PC-3 (cell line): ENCODE measurements at regions of chr7 and their contacts with region 1.

Region 1: DNA sequence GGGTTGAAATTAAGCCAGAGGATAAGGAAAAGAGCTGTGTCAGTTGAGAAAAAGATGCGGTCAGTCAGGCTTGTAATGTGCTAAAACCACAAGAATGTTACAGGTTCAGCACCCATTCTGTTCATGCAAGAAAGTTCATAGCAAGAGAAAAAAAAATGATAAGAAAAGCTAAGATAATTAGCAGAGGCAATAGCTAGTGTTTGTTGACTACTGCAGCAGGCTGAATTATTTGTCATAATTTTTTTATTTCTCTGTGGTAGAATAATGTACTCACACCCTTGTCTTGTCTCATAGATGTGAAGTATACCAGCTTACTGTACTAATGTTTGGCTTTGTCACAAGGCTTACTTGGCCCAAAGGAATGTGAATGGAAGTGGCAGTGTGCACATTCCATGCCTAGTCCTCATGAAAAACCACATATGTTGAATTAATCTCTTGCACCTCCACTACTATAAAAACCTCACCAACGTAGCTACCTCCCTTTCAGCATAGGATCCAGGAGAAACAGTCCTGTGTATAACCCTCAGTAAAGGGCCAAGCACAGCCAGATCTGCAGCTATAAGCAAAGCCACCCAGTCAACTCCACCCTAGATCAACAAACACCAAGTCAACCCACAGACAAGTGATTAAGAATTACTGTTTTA is 74.8 kb downstream of the CRPPA start:
- DNase-seq: peak; percentile 88
- ATAC-seq: peak; percentile 91
- H3K4me3 ChIP-seq: no peak overlapping the region; the same call in 1 of the 2 replicates
- H3K27ac ChIP-seq: peak overlapping the region; percentile 39
- H3K4me1 ChIP-seq: peaks cover 29% of the 10 kb centered on the region
- H3K27me3 ChIP-seq: no peaks in the 10 kb centered on the region
- CTCF ChIP-seq: no peak

Region 2: DNA sequence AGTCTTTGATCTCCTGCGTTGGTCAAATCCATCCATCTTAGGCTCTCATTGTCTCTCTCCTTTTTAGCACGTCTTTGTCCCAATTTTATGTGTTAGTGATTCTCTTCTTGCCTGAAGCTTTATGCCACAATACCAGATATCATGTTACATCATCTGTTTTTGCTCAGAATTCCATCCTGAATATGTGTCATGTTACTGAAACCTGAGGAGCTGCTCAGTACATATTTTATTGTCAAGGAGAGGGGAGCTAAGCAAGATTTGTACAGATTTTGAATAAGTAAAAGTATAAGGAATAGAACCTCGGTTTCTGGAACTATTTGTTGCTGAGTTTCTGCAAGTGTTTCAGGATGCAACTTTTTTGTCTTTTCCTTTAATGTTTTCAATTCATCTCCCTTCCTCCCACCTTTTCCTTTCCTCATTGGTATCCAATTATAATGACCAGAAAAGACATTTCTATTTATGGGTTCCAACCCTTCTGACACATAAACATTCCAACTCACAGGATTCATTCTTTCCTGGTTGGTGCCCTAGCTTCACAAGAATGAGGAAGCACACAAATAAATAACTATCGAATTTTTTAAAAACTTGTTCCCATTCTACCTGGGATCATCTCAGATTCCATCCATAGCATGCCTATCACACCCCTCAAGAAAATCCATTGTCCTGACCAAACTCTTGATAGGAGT is 216.9 kb before region 1 on chr7:
- CTCF ChIA-PET with region 1: no interaction called
- POLR2A ChIA-PET with region 1: no interaction called
- intact Hi-C with region 1: loop called (anchors 5 kb)
- DNase-seq: peak; percentile 86
- ATAC-seq: peak; percentile 96
- H3K4me3 ChIP-seq: peak overlapping the region; percentile 42; the same call in 1 of the 2 replicates
- H3K27ac ChIP-seq: peak overlapping the region; percentile 55
- H3K4me1 ChIP-seq: peaks cover 23% of the 10 kb centered on the region
- H3K27me3 ChIP-seq: no peaks in the 10 kb centered on the region
- CTCF ChIP-seq: no peak

Region 3: DNA sequence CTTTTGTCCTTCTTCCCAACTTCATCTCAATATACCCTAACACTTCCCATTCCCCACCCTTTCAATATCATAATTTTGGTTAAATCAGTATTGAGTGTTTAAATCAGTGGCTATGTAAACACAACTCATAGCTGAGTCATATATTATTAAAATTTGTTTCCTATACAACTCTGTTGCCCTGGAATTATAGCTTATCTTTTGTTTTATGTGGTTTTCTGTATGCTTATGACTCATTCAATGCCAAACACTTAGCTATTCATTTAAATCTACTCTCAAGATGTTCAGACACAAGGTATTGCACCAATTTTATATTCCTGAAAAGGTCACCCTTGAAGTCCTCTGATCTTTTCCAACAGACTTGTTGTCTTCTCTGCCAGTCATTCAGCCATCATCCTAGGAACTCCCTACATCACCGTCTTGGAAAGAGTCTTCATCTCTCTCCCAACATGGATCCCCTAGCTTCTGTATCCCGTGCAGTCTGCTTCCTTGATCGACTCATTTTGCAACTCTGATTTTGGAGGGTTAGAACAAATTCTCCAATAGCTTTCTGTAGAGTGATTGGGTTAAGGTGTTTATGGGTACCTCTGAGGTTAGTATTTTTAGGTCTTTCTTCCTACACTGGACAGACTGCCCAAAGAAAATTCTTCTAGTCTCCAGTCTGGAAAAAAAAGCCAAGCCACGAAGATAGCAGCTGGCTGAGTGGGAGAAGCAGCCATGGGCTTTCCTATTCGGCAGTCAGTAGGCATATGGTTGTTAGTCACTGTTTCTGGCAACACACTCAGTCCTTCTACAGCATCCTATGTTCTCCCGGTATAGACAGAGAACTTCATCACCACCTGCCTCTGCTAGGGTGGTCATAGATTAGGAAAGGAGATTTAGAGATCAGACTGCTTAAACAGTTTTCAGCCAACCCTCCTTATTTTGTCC is 27.2 kb before region 1 on chr7:
- CTCF ChIA-PET with region 1: no interaction called
- POLR2A ChIA-PET with region 1: no interaction called
- intact Hi-C with region 1: loop called (anchors 1 kb)
- DNase-seq: peak; percentile 82
- ATAC-seq: peak; percentile 94
- H3K4me3 ChIP-seq: no peak overlapping the region
- H3K27ac ChIP-seq: peak overlapping the region; percentile 62
- H3K4me1 ChIP-seq: peaks cover 20% of the 10 kb centered on the region
- H3K27me3 ChIP-seq: no peaks in the 10 kb centered on the region
- CTCF ChIP-seq: no peak

Region 4: GRCh38 chr7:16402091-16402490 is 55.6 kb after region 1 on chr7:
- CTCF ChIA-PET with region 1: no interaction called
- POLR2A ChIA-PET with region 1: no interaction called
- intact Hi-C with region 1: loop called (anchors 1 kb)
- DNase-seq: peak; percentile 54
- ATAC-seq: peak; percentile 86
- H3K4me3 ChIP-seq: no peak overlapping the region
- H3K27ac ChIP-seq: peak overlapping the region; percentile 71
- H3K4me1 ChIP-seq: peaks cover 19% of the 10 kb centered on the region
- H3K27me3 ChIP-seq: no peaks in the 10 kb centered on the region
- CTCF ChIP-seq: no peak